Activated T-helper 1 cell treated with anti-CD3 and anti-CD28 coated beads, Interleukin-12 subunit alpha, Interleukin-12 subunit beta, Interleukin-2, Interleukin-4 antibody, amounts not matched to agents 30 ng/mL and 10 ng/mL and 1 ng/mL, durations not matched to agents 14 hours and 24 hours and 36 hours (primary cell): ENCODE measurements at regions of chr4 and their contacts with region 1.

Region 1: DNA sequence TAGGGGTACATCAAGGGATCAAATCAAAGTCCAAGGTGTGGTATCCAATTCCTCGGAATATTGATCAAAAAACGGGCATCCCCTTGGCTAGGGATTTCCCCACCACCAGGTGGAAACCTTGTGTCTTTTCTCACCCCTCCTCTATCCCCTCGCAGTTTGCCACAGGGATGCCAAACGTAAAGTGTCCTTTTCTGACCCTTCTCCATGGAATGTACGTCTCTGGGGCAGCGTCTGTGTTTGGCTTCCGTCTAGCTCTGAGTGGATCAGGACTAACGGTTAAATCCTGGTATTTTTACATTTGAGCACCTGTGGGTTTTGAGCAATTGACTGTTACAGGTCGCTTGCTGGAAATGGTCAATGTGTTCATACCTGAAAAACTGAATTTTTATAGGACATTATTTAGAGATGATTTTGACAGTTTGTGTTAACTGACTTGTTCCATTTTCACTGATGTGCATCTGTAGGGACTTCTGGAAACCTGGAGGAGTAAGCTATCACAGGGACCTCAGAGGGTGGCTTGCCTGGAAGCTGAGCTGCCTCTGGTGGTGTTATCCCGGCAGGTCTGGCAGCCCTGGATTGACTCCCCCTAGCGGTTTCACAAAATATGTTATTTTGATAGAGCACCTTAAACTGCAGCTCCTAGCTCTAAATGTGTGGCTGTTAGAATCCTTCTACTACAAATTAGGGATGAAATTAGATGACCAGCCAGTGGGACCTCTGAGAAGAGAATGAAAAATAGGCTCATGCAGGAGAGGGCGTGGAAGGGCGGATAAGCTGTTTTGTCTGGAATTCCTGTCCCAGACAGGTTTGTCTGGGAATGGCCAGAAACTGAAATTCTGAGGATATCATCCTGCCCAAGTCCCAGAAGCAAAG is 8.8 kb upstream of the MGST2 start:
- DNase-seq: peak; percentile 42
- H3K4me3 Mint-ChIP-seq: peak overlapping the region; percentile 73
- H3K27ac Mint-ChIP-seq: peak overlapping the region; percentile 94
- H3K4me1 Mint-ChIP-seq: peaks cover 45% of the 10 kb centered on the region
- H3K27me3 Mint-ChIP-seq: no peaks in the 10 kb centered on the region

Region 2: GRCh38 chr4:138406876-138407275 is 1250.0 kb before region 1 on chr4:
- intact Hi-C with region 1: no loop called
- DNase-seq: no peak
- H3K4me3 Mint-ChIP-seq: no peak overlapping the region
- H3K27ac Mint-ChIP-seq: no peak overlapping the region
- H3K4me1 Mint-ChIP-seq: no peaks in the 10 kb centered on the region
- H3K27me3 Mint-ChIP-seq: no peaks in the 10 kb centered on the region

Region 3: DNA sequence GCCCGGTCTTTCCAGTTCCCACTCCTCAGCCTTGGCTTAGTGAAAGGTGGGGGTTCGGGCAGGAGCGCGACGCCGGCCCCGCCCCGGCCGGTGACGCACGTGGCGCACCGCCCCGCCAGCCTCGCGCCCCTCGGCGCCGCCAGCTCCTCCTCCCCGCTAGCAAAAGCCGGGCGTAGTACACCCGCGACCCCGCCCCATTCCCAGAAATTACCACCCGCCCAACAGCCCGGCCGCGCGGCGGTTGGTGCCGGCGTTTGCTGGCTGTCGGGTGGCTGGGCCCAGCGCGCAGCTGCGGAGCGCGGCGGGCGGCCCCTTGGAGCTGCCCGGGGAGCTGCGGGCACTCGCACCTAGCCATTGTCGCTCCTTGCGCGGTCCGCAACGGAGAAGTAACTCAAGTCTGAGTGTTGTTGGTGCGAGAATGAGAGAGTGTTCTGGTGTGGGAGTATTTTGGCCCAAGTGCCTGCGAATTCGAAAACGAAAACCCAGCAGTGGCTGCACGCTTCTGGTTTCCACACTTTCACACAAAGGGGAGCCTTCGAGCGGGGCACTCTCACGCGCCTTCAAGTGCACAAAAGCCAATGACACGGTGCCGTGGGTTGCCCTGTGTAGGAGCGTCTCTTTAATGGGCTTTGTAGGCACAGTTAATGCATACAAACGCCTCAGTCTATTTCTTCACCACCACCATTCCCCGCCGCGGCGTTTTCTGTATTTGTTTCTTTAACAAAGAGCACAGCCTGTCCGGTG is 478.8 kb before region 1 on chr4:
- intact Hi-C with region 1: loop called (anchors 1 kb)
- DNase-seq: peak; percentile 97
- H3K4me3 Mint-ChIP-seq: peak overlapping the region; percentile 86
- H3K27ac Mint-ChIP-seq: peak overlapping the region; percentile 91
- H3K4me1 Mint-ChIP-seq: peaks cover 36% of the 10 kb centered on the region
- H3K27me3 Mint-ChIP-seq: peaks cover 50% of the 10 kb centered on the region

Region 4: GRCh38 chr4:139547979-139548378 is 108.9 kb before region 1 on chr4:
- intact Hi-C with region 1: no loop called
- DNase-seq: no peak
- H3K4me3 Mint-ChIP-seq: no peak overlapping the region
- H3K27ac Mint-ChIP-seq: no peak overlapping the region
- H3K4me1 Mint-ChIP-seq: peaks cover 14% of the 10 kb centered on the region
- H3K27me3 Mint-ChIP-seq: no peaks in the 10 kb centered on the region

Region 5: GRCh38 chr4:139704915-139705485 is 48.1 kb after region 1 on chr4:
- intact Hi-C with region 1: loop called (anchors 2 kb)
- DNase-seq: no peak
- H3K4me3 Mint-ChIP-seq: no peak overlapping the region
- H3K27ac Mint-ChIP-seq: no peak overlapping the region
- H3K4me1 Mint-ChIP-seq: no peaks in the 10 kb centered on the region
- H3K27me3 Mint-ChIP-seq: no peaks in the 10 kb centered on the region

Region 6: DNA sequence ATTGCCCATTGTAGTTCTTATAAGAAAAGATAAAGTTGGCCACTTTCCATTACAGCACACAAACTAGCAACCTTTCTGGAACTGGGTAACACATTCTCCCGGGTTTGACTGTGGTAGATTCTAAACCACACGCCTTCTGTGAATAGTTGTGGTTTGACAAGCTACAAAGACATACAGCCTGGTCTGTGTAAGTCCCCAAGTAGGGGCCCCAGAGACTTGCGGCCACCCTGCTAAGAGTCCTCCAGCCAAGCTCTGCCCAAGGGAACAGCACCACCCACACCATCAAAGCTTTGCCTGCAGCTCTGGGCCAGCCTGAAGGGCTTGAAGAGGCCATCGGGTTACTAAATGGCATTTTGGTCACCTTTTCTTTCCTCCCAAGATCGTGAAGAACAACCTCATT is 293.7 kb after region 1 on chr4:
- intact Hi-C with region 1: loop called (anchors 2 kb)
- DNase-seq: peak; percentile 57
- H3K4me3 Mint-ChIP-seq: peak overlapping the region; percentile 48
- H3K27ac Mint-ChIP-seq: peak overlapping the region; percentile 85
- H3K4me1 Mint-ChIP-seq: peaks cover 49% of the 10 kb centered on the region
- H3K27me3 Mint-ChIP-seq: peaks cover 9% of the 10 kb centered on the region

Region 7: GRCh38 chr4:140095694-140096482 is 439.0 kb after region 1 on chr4:
- intact Hi-C with region 1: loop called (anchors 5 kb)
- DNase-seq: peak; percentile 63
- H3K4me3 Mint-ChIP-seq: peak overlapping the region; percentile 80
- H3K27ac Mint-ChIP-seq: peak overlapping the region; percentile 94
- H3K4me1 Mint-ChIP-seq: peaks cover 89% of the 10 kb centered on the region
- H3K27me3 Mint-ChIP-seq: peaks cover 3% of the 10 kb centered on the region

Region 8: GRCh38 chr4:140523857-140524742 is 867.2 kb after region 1 on chr4 and contains the start of gene ELMOD2:
- intact Hi-C with region 1: loop called (anchors 5 kb)
- DNase-seq: peak; percentile 97
- H3K4me3 Mint-ChIP-seq: peak within 1 kb of the TSS; percentile 88
- H3K27ac Mint-ChIP-seq: peak within 1 kb of the TSS; percentile 55
- H3K4me1 Mint-ChIP-seq: peaks cover 19% of the 10 kb centered on the region
- H3K27me3 Mint-ChIP-seq: no peaks in the 10 kb centered on the region
- total RNA-seq, gene ELMOD2: 10.8 and 15.7 TPM in 2 replicates

Region 9: DNA sequence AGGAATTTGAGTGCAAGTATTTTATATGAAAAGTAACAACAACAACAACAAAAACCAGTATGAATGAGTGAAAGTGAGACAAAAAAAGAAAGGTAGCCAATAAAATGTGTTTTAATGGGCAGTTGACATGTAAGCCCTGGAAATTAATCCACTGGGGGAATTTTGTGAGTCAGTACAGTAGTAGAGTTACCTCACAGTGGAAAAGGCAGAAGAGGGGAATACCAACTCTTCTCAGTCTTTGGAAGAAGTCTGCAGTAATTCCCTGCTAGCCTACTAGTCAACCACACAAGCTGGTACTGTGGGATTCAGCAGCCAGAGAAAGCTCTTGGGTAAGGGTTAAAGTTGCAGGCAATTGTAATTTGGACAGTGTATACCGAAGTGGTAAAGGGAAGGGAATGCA is 1903.2 kb after region 1 on chr4:
- intact Hi-C with region 1: no loop called
- DNase-seq: no peak
- H3K4me3 Mint-ChIP-seq: no peak overlapping the region
- H3K27ac Mint-ChIP-seq: no peak overlapping the region
- H3K4me1 Mint-ChIP-seq: no peaks in the 10 kb centered on the region
- H3K27me3 Mint-ChIP-seq: no peaks in the 10 kb centered on the region